ENCODE measurements at regions of chr7 and their contacts with region 1.

Region 1: GRCh38 chr7:80770675-80771081 is 132.2 kb downstream of the CD36 start:
- DNase-seq: no peak
- ATAC-seq: no peak
- H3K4me3 ChIP-seq: no peak overlapping the region
- H3K27ac ChIP-seq: no peak overlapping the region
- H3K4me1 ChIP-seq: peaks cover 7% of the 10 kb centered on the region; the same call in 1 of the 2 replicates
- H3K27me3 ChIP-seq: no peaks in the 10 kb centered on the region
- CTCF ChIP-seq: no peak
- POLR2A ChIP-seq: no peak
- RAD21 ChIP-seq: no peak

Region 2: DNA sequence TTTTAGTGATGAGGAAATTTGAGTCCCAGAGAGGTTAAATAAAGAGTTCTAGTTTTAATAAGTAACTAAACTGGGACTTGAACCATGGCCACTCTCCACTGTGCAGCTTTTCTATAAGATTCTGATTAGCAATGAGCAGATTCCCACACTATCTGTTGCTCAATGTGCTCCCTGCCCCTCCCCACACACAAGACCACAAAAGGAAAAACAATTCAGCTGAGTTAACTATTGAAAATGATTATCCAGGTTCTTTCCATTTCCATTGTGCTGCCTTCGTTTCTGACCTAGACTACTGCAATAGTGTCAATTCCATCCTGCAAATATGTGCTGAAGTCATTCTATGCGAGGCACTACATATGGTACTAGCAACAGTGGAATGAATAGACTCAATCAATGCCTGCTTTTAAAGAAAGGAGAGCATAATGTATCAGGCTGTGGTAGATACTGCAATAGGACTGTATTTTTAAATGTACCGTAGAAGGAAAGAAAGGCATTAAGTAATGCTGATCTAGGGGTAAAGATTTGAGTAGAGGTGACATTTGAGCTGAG is 51.2 kb after region 1 on chr7:
- CTCF ChIA-PET with region 1: no interaction called
- POLR2A ChIA-PET with region 1: no interaction called
- dilution Hi-C with region 1: no loop called
- in situ Hi-C with region 1: no loop called
- intact Hi-C with region 1: no loop called
- DNase-seq: no peak
- ATAC-seq: no peak
- H3K4me3 ChIP-seq: no peak overlapping the region
- H3K27ac ChIP-seq: no peak overlapping the region
- H3K4me1 ChIP-seq: no peaks in the 10 kb centered on the region
- H3K27me3 ChIP-seq: no peaks in the 10 kb centered on the region
- CTCF ChIP-seq: no peak
- POLR2A ChIP-seq: no peak
- RAD21 ChIP-seq: no peak

Region 3: GRCh38 chr7:80833289-80834268 is 62.9 kb after region 1 on chr7:
- CTCF ChIA-PET with region 1: no interaction called
- POLR2A ChIA-PET with region 1: no interaction called
- dilution Hi-C with region 1: no loop called
- in situ Hi-C with region 1: no loop called
- intact Hi-C with region 1: loop called (anchors 5 kb)
- DNase-seq: peak; percentile 75
- ATAC-seq: no peak
- H3K4me3 ChIP-seq: no peak overlapping the region
- H3K27ac ChIP-seq: no peak overlapping the region
- H3K4me1 ChIP-seq: peaks cover 3% of the 10 kb centered on the region; the same call in 1 of the 2 replicates
- H3K27me3 ChIP-seq: no peaks in the 10 kb centered on the region
- CTCF ChIP-seq: no peak
- POLR2A ChIP-seq: no peak
- RAD21 ChIP-seq: no peak

Measured in IMR-90 (cell line).